ENCODE measurements at regions of chr21 and their contacts with region 1.

Region 1: DNA sequence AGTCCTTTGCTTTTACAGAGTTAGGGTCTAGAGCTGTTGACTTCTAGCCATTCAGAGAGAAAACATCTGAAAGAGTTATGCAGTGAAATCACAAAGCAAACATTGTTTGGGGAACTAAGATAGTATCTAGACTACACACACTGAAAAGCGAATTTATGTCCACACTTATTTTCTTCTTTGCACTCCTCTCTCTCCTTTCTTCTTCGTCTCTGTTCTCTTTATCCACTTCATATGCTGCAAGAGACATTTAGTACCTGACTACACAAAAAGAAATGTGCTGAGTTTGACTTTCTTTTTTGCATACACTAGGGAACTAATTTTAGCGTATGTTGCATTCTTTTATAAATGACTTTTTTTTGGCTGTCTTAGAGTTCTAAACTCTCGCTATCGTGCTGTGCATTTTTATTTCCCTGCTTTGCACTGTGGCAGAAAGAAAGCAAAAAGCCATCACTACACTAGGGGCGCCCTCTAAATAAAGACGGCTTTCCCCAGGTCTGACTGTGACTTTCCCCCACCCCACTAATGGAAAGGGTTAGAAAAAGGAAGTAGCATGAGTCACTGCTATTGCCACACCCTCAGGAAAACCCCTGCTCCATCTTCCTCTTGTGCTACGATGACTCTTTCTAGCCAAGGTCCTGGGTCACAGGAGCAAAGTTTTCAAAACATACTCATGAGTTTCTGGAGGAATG is 65.7 kb downstream of the MAP3K7CL start:
- DNase-seq: peak; percentile 92
- H3K4me3 Mint-ChIP-seq: peak overlapping the region; percentile 91
- H3K27ac Mint-ChIP-seq: peak overlapping the region; percentile 94
- H3K4me1 Mint-ChIP-seq: peaks cover 37% of the 10 kb centered on the region
- H3K27me3 Mint-ChIP-seq: no peaks in the 10 kb centered on the region

Region 2: DNA sequence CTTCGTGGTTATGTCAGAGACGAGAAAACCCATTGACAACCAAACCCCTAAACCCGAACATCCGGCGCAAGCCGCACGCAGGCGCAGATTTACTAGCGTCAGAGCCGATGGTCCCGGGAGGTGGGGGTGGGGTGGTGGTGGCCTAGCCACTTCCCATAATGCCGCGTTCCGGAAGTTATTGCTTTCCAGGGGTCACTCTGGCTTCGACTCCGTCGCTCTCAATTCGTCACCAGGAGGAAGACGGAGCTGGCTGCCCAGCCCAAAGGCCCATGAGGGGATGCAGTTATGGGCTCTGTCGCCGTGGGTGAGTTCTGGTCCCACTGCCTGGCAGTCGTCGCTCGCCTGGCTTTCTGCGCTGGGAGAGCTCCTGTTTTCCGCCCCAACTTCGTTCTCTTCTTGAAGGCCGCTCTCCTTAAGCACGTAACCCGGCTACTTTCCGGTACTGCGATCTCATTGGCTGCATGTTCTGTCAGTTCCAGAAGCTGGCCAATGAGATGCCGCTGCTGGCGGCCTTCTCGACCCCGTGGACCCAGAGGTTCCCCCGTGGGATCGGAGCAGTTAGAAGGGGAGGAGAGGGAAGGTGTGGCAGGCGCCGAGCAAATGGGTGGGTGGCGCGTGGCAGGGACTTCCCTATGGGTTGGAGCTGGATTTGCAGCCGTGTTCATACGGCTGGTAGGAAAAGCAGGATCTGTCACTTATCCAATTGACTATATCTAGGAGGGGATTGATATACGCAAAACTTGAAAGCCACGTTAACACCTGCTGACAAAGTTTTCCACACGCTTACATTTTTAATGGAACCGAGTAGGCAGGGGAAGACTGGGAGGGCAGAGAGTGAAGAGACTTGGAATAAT is 171.4 kb before region 1 on chr21 and contains the start of gene USP16:
- intact Hi-C with region 1: loop called (anchors 1 kb)
- DNase-seq: peak; percentile 99
- H3K4me3 Mint-ChIP-seq: peak within 1 kb of the TSS; percentile 93
- H3K27ac Mint-ChIP-seq: peak within 1 kb of the TSS; percentile 99
- H3K4me1 Mint-ChIP-seq: peaks cover 41% of the 10 kb centered on the region
- H3K27me3 Mint-ChIP-seq: no peaks in the 10 kb centered on the region
- total RNA-seq, gene USP16: 45.7 and 46.7 TPM in 2 replicates

Region 3: DNA sequence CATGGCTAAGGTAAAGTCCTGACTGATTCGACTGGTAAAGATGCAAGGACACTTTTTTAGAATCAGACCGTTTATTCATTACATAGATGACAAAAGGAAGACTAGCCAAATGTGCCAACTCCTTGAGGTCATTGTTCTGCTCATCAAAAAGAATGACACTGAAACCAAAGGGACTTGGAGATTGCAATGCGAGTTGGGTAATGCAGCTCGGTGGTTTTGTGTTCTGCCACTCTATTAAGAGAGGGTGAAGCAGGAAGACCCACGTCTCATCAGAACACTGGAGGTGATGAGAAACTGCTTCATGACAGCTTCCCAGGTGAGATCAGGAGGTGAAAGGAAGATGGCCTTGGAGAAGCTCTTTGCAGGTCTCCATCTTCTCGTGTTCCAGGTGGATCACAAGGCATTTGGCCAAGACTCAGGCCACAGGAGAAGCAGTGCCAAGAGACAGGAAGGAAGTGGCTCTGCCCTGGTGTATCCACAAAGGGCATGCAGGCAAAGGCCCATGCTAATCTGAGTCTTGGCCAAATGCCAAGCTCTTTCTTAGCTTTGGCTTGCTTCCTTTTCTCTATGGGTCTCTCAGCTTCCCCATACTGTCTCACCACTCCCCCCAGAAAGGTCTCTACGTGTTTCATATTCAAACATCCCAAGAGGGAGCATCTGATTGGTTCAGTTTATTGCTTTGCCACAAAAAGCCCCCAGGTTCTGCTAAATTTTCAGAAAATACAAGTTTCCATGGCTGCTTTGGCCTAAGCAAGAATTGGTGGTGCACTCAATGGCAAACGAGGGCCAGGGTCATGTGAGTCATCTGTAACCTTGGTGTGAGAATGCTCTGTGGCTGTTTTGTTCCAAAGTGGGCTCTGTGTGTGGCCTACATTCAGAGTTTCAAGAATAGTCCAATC is 117.0 kb before region 1 on chr21:
- intact Hi-C with region 1: loop called (anchors 5 kb)
- DNase-seq: peak; percentile 67
- H3K4me3 Mint-ChIP-seq: peak overlapping the region; percentile 88
- H3K27ac Mint-ChIP-seq: peak overlapping the region; percentile 77
- H3K4me1 Mint-ChIP-seq: peaks cover 34% of the 10 kb centered on the region
- H3K27me3 Mint-ChIP-seq: no peaks in the 10 kb centered on the region

Region 4: DNA sequence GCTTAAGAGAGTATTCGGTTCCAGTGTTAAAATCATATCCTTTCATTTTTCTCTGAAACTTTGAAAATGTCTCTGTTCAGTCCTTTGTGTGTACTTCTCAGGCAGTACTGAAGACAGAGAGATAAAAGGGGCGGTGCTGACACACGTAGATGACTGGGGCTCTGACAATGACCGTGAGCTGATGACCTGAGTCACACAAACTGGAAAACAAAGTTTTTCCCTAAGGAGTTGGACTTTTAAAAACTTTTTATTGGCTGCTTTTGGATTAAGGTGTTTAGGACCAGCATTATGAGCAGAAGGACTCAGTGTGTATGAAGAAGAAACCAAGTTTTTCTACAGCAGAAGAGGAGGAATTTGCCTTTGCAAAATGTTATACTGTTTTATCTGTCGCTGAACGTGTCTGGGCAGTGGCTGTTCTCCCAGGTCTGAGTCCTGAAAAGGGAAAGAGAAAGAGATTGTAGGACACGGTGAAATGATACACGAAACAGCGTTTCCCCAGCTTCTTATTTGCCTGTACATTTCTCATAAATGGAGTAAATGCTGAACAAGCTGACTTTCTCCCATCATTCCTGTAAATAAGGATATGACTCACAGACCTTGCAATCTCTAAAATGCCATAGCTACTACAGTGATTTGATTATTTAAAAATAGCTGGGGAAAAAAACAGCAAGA is 14.2 kb before region 1 on chr21:
- intact Hi-C with region 1: loop called (anchors 2 kb)
- DNase-seq: peak; percentile 60
- H3K4me3 Mint-ChIP-seq: peak overlapping the region; percentile 77
- H3K27ac Mint-ChIP-seq: peak overlapping the region; percentile 83
- H3K4me1 Mint-ChIP-seq: peaks cover 25% of the 10 kb centered on the region
- H3K27me3 Mint-ChIP-seq: no peaks in the 10 kb centered on the region

Region 5: GRCh38 chr21:29208682-29209059 is 12.5 kb after region 1 on chr21:
- intact Hi-C with region 1: loop called (anchors 1 kb)
- DNase-seq: no peak
- H3K4me3 Mint-ChIP-seq: no peak overlapping the region
- H3K27ac Mint-ChIP-seq: no peak overlapping the region
- H3K4me1 Mint-ChIP-seq: peaks cover 10% of the 10 kb centered on the region
- H3K27me3 Mint-ChIP-seq: no peaks in the 10 kb centered on the region